Activated CD4-positive, alpha-beta memory T cell treated with anti-CD3 and anti-CD28 coated beads for 36 hours (primary cell): ENCODE measurements at regions of chr15 and their contacts with region 1.

Region 1: DNA sequence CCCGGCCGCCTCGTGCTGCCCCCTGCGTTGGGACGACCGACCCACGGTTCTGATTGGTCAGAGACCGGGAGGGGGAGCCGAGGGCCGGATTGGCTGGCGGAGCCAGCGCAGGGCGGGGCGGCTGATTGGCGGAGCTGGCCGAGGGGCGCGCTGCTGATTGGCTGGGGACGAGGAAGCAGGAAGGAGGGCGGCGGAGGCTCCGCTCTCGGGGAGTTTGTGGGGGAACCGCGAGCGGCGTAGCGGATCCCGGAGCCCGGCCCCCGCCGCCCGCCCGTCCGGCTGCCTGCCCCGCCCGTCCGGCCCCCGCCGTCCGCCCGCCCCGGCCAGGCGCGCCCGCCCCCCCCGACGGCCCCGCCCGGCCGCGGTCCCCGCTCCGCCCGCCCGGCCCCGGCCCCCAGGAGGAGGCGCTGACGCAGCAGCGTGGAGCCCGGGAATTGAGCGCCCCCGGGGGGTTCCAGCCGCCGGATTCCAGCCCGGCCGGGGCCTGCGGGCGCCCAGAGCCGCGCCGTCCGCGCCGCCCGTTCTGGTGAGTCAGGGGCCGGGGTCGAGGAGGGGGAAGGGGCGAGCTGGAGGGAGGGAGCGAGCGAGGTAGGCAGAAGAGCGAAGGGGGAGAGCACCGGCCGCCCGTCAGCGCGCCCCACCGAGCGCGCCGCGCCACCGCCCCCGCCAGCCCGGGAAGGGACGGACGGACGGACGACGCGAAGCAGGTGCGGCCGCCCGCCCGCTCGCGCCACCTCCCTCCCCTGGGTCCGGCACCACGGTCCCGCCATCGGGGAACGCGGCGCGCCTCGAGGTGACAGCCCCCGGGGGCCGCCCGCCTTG is at the start of gene BAHD1:
- DNase-seq: peak; percentile 97
- H3K4me3 Mint-ChIP-seq: peak within 1 kb of the TSS; percentile 87
- H3K27ac Mint-ChIP-seq: peak within 1 kb of the TSS; percentile 55
- H3K4me1 Mint-ChIP-seq: peaks cover 59% of the 10 kb centered on the region
- H3K27me3 Mint-ChIP-seq: peaks cover 24% of the 10 kb centered on the region
- total RNA-seq, gene BAHD1: 18.8 to 19.5 TPM

Region 2: GRCh38 chr15:40405501-40406381 is 35.2 kb before region 1 on chr15 and contains the start of gene IVD:
- CTCF ChIA-PET with region 1: no interaction called
- POLR2A ChIA-PET with region 1: no interaction called
- intact Hi-C with region 1: loop called (anchors 2 kb)
- DNase-seq: peak; percentile 95
- H3K4me3 Mint-ChIP-seq: peak within 1 kb of the TSS; percentile 69
- H3K27ac Mint-ChIP-seq: peak within 1 kb of the TSS; percentile 65
- H3K4me1 Mint-ChIP-seq: peaks cover 49% of the 10 kb centered on the region
- H3K27me3 Mint-ChIP-seq: no peaks in the 10 kb centered on the region
- total RNA-seq, gene IVD: 37.3 to 38.7 TPM

Region 3: DNA sequence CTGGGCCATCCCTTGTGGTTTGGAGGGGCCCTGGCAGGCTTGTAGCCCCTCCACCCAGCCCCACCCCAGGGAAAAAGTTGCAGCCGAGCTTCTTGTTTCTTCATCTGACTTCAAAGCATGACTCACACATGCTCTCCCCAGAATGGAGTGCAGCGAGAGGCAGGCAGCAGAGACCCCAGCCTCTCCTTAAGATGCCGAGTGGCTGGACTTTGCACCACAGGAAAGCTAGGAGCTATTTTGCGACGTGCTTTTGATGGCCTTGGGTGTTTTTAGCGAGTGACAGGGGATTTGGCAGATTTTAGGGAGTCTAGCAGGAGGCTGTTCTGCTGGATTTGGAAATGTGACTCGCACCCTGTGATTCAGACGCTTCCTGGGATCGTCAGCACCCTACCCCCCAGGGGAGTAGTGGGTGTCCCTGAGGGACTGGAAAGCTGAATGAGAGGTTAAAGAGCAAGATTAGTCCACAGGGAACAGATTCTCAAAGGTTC is 14.0 kb after region 1 on chr15:
- CTCF ChIA-PET with region 1: interaction called, 10 read pairs
- POLR2A ChIA-PET with region 1: interaction called, 4 read pairs
- intact Hi-C with region 1: no loop called
- DNase-seq: peak; percentile 31
- H3K4me3 Mint-ChIP-seq: no peak overlapping the region
- H3K27ac Mint-ChIP-seq: peak overlapping the region; percentile 69
- H3K4me1 Mint-ChIP-seq: peaks cover 68% of the 10 kb centered on the region
- H3K27me3 Mint-ChIP-seq: no peaks in the 10 kb centered on the region

Region 4: GRCh38 chr15:40493089-40493840 is 52.3 kb after region 1 on chr15:
- CTCF ChIA-PET with region 1: no interaction called
- POLR2A ChIA-PET with region 1: no interaction called
- intact Hi-C with region 1: loop called (anchors 5 kb)
- DNase-seq: peak; percentile 85
- H3K4me3 Mint-ChIP-seq: peak overlapping the region; percentile 4
- H3K27ac Mint-ChIP-seq: peak overlapping the region; percentile 74
- H3K4me1 Mint-ChIP-seq: peaks cover 27% of the 10 kb centered on the region
- H3K27me3 Mint-ChIP-seq: peaks cover 1% of the 10 kb centered on the region

Region 5: GRCh38 chr15:40506964-40507571 is 66.1 kb after region 1 on chr15:
- CTCF ChIA-PET with region 1: interaction called, 6 read pairs
- POLR2A ChIA-PET with region 1: interaction called, 3 read pairs
- intact Hi-C with region 1: loop called (anchors 2 kb)
- DNase-seq: peak; percentile 74
- H3K4me3 Mint-ChIP-seq: no peak overlapping the region
- H3K27ac Mint-ChIP-seq: no peak overlapping the region
- H3K4me1 Mint-ChIP-seq: peaks cover 13% of the 10 kb centered on the region
- H3K27me3 Mint-ChIP-seq: peaks cover 45% of the 10 kb centered on the region

Region 6: GRCh38 chr15:40513609-40514008 is 72.7 kb after region 1 on chr15:
- CTCF ChIA-PET with region 1: interaction called, 10 read pairs
- POLR2A ChIA-PET with region 1: no interaction called
- intact Hi-C with region 1: no loop called
- DNase-seq: no peak
- H3K4me3 Mint-ChIP-seq: no peak overlapping the region
- H3K27ac Mint-ChIP-seq: no peak overlapping the region
- H3K4me1 Mint-ChIP-seq: peaks cover 11% of the 10 kb centered on the region
- H3K27me3 Mint-ChIP-seq: peaks cover 35% of the 10 kb centered on the region

Region 7: DNA sequence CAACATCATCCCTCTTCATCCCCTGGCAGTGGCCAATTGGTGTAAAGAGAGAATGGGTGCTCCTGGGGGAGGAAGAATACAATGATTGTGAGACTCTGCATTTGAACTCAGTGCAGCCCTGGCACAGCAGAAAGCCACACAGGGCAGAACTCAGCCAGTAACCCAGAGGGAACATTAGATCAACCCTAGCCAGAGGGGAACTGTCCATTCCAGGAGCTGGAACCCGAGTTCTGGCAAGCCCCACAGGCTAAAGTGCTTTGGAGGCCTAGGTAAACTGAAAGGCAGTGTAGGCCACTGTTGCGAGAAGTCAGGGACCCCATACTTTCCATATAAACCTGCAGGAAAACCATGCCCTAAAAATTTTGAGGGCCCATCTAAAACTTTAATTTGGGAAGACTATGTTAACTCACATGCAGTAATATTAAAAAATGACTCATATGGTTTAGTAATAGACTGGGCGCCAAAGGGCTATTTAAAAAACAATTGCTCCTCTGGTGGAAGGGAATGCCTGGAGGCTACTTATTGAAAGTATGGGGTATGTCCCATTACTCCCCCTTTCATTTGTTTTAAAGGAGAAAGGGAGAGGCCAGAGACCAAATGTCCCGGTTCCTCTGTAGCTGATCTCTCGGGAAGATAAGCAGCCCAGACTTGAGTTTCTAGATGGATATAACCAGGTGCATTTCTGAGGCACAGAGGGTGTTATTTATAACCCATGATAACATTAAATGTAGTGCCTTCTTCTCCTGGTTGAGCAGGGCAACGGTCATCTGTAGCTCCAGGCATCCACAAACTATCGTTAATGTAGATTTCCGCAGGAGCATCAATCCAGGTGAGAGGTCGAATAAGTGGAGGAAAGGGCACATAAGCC is 248.2 kb after region 1 on chr15:
- CTCF ChIA-PET with region 1: no interaction called
- POLR2A ChIA-PET with region 1: no interaction called
- intact Hi-C with region 1: no loop called
- DNase-seq: no peak
- H3K4me3 Mint-ChIP-seq: no peak overlapping the region
- H3K27ac Mint-ChIP-seq: no peak overlapping the region
- H3K4me1 Mint-ChIP-seq: peaks cover 7% of the 10 kb centered on the region
- H3K27me3 Mint-ChIP-seq: no peaks in the 10 kb centered on the region